ENCODE measurements at regions of chr2 and their contacts with region 1.

Region 1: GRCh38 chr2:42523361-42523760 is 29.6 kb upstream of the KCNG3 start:
- DNase-seq: no peak
- ATAC-seq: no peak
- H3K4me3 ChIP-seq: no peak overlapping the region
- H3K27ac ChIP-seq: no peak overlapping the region
- H3K4me1 ChIP-seq: no peaks in the 10 kb centered on the region
- H3K27me3 ChIP-seq: peaks cover 6% of the 10 kb centered on the region
- CTCF ChIP-seq: no peak
- POLR2A ChIP-seq: no peak
- RAD21 ChIP-seq: no peak

Region 2: GRCh38 chr2:42321452-42322064 is 201.8 kb before region 1 on chr2:
- CTCF ChIA-PET with region 1: no interaction called
- POLR2A ChIA-PET with region 1: interaction called, 18 read pairs
- dilution Hi-C with region 1: no loop called
- in situ Hi-C with region 1: no loop called
- intact Hi-C with region 1: no loop called
- DNase-seq: no peak
- ATAC-seq: no peak
- H3K4me3 ChIP-seq: no peak overlapping the region
- H3K27ac ChIP-seq: no peak overlapping the region
- H3K4me1 ChIP-seq: no peaks in the 10 kb centered on the region; the same call in 1 of the 2 replicates
- H3K27me3 ChIP-seq: no peaks in the 10 kb centered on the region
- CTCF ChIP-seq: no peak
- POLR2A ChIP-seq: no peak
- RAD21 ChIP-seq: no peak

Region 3: DNA sequence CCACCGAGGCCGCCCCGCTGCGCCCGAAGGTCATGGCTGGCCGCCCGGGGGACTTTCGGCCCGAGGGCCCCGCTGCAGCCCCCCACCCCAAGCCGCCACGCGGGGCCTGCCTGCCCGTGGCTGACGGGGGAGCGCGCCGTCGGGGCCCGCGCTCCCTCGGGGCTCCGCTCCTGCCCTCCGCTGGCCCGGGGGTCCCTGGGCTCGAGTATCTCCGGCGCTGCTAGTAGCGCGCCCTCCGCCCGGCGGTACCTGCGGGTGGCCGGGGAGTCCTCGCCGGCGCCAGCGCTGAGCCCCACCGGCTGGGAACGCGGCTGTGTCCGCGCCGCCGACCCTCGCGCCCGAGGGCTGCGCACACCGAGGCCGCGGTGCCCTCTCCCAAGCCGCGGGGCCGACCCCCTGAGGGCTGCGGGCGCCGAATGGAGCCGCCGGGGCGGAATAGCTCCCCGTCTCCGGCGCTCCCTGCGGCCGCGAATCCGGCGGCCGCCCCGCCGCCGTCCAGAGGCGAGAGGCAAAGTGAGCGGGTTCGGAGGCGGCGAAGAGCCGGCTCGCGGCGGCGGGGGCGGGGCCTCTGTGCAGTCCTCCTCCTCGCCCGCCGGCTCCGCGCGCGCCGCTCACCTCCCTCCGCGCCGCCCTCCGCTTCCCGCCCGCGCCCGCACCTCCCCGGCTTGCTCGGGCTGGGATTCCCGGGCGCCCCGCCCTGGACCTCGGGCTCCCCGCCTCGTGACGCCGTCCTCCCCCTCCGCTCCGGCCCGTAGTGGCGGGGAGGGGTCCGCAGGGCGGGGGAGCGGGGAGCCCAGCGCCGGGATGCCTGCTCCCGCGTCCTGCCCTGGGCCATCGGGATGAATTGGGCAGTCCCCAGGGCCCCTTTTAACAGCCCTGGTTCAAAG is 29.6 kb before region 1 on chr2 and contains the start of gene KCNG3:
- CTCF ChIA-PET with region 1: no interaction called
- POLR2A ChIA-PET with region 1: no interaction called
- dilution Hi-C with region 1: no loop called
- in situ Hi-C with region 1: no loop called
- intact Hi-C with region 1: no loop called
- DNase-seq: peak; percentile 12
- ATAC-seq: peak; percentile 86
- H3K4me3 ChIP-seq: peak within 1 kb of the TSS; percentile 31
- H3K27ac ChIP-seq: no peak within 1 kb of the TSS
- H3K4me1 ChIP-seq: no peaks in the 10 kb centered on the region
- H3K27me3 ChIP-seq: peaks cover 55% of the 10 kb centered on the region
- CTCF ChIP-seq: no peak
- POLR2A ChIP-seq: no peak
- RAD21 ChIP-seq: no peak
- total RNA-seq, gene KCNG3: under 0.01 TPM in 1 of 2 replicates, not detected in the other

Region 4: DNA sequence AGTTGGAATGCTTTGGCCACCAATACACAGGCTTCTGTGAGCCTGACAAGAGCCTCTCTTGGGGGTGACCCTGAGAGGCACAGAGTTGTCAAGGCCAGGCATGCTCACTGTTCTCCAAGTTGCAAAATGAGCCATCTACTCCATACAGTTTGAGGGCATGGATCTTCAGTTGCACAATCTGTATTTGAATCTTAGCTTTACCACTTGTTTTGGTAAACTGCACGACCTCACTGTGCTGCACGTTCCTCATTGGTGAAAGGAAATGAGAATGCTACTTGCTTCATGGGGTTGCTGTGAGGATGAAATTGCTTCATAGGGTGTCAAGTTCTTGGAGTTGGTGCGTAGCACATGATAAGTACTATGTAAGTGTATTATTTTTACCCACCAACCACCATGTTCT is 281.0 kb after region 1 on chr2:
- CTCF ChIA-PET with region 1: no interaction called
- POLR2A ChIA-PET with region 1: interaction called, 16 read pairs
- dilution Hi-C with region 1: no loop called
- in situ Hi-C with region 1: no loop called
- intact Hi-C with region 1: no loop called
- DNase-seq: peak; percentile 65
- ATAC-seq: peak; percentile 19
- H3K4me3 ChIP-seq: no peak overlapping the region
- H3K27ac ChIP-seq: no peak overlapping the region
- H3K4me1 ChIP-seq: peaks cover 13% of the 10 kb centered on the region
- H3K27me3 ChIP-seq: peaks cover 5% of the 10 kb centered on the region; the same call in 1 of the 2 replicates
- CTCF ChIP-seq: no peak
- POLR2A ChIP-seq: no peak
- RAD21 ChIP-seq: no peak

Measured in IMR-90 (cell line).